Caco-2 (cell line): ENCODE measurements at regions of chr7 and their contacts with region 1.

Region 1: DNA sequence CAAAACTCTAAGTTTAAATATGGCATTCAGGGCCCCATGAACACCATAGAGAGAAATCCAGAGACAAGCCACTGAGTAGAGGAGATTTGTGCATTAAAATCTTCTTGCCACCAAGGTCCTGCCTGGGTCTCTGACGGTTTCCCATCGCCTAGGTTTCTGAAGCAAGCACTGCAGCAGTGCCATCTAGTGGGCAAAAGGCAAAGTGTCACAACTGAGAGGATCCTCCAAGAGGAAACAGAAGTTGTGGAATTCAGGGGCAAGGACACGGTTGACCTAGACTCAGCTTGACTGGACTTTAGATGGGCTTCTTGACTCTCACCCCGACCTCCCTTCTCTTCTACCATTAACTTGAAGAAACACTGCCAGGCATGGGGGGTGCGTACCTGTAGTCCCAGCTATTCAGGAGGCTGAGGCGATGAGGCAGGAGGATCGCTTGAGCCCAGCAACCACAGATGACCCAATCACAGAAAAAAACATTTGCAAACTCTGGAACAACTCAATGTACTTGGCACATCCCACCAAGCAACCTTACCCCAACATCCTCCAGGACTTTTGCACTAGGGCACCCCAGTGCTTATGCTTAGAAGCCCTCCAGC is 604.1 kb downstream of the GALNT17 start:
- DNase-seq: peak; percentile 51 to 61
- H3K4me3 ChIP-seq: no peak overlapping the region
- H3K4me3 Mint-ChIP-seq: no peak overlapping the region
- H3K27ac Mint-ChIP-seq: no peak overlapping the region
- H3K4me1 ChIP-seq: no peaks in the 10 kb centered on the region
- H3K4me1 Mint-ChIP-seq: no peaks in the 10 kb centered on the region
- H3K27me3 ChIP-seq: no peaks in the 10 kb centered on the region
- H3K27me3 Mint-ChIP-seq: no peaks in the 10 kb centered on the region
- CTCF ChIP-seq: peak; percentile 73 to 79

Region 2: GRCh38 chr7:70829221-70830059 is 906.6 kb before region 1 on chr7:
- CTCF ChIA-PET with region 1: interaction called, 3 read pairs
- POLR2A ChIA-PET with region 1: no interaction called
- intact Hi-C with region 1: loop called (anchors 1 kb)
- DNase-seq: peak; percentile 72 to 74
- H3K4me3 ChIP-seq: no peak overlapping the region
- H3K4me3 Mint-ChIP-seq: no peak overlapping the region
- H3K27ac Mint-ChIP-seq: no peak overlapping the region
- H3K4me1 ChIP-seq: no peaks in the 10 kb centered on the region
- H3K4me1 Mint-ChIP-seq: peaks cover 7% of the 10 kb centered on the region
- H3K27me3 ChIP-seq: no peaks in the 10 kb centered on the region
- H3K27me3 Mint-ChIP-seq: peaks cover 2% of the 10 kb centered on the region
- CTCF ChIP-seq: peak; percentile 91 to 94